Activated CD4-positive, alpha-beta memory T cell treated with anti-CD3 and anti-CD28 coated beads, Interleukin-2, amount 10 ng/mL, durations not matched to agents 7 days and 5 days (primary cell): ENCODE measurements at regions of chr10 and their contacts with region 1.

Region 1: DNA sequence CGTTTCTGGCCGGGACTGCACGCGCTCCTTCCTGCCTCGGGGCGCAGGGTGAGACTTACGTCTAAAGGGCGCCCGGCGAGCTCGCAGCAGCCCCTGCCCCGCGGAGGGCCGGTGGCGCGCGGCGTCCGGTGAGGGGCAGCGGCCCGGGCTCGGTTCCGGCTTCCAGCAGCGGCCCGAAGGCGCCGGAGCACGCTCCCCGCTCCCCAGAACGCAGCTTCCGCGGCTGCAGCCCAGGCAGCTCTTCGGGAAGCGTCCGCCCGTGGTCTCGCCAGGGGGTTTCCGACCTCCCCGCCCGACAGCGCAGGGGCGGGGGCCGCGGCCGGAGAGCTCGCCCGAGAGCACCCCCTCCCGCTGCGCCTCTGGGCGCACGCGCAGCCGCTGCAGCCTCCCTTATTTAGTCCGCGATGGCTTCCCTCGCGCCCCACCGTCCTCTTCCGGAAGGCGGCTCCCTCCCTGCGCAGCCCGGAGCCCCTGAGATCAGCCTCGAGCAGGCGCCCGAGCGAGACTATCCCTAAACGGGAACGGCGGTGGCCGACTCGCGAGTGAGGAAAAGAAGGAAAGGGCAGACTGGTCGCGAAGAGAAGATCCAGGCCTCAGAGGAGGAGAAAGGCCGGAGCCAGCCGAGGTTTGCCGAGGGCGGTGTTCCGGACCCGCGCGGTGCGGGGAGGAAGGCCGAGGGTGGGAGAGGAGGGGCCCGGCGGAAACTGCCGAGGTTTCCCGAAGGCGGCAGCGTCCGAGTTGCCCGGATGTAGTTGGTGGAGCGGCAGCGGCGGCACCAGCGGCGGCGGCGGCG is at the start of gene WAC:
- DNase-seq: peak; percentile 97
- H3K4me3 Mint-ChIP-seq: peak within 1 kb of the TSS; percentile 99
- H3K27ac Mint-ChIP-seq: peak within 1 kb of the TSS; percentile 100
- H3K4me1 Mint-ChIP-seq: peaks cover 58% of the 10 kb centered on the region
- H3K27me3 Mint-ChIP-seq: no peaks in the 10 kb centered on the region
- total RNA-seq, gene WAC: 128 to 132 TPM

Region 2: GRCh38 chr10:28479425-28479865 is 53.1 kb before region 1 on chr10:
- CTCF ChIA-PET with region 1: no interaction called
- POLR2A ChIA-PET with region 1: no interaction called
- DNase-seq: no peak
- H3K4me3 Mint-ChIP-seq: no peak overlapping the region
- H3K27ac Mint-ChIP-seq: no peak overlapping the region
- H3K4me1 Mint-ChIP-seq: no peaks in the 10 kb centered on the region
- H3K27me3 Mint-ChIP-seq: no peaks in the 10 kb centered on the region

Region 3: DNA sequence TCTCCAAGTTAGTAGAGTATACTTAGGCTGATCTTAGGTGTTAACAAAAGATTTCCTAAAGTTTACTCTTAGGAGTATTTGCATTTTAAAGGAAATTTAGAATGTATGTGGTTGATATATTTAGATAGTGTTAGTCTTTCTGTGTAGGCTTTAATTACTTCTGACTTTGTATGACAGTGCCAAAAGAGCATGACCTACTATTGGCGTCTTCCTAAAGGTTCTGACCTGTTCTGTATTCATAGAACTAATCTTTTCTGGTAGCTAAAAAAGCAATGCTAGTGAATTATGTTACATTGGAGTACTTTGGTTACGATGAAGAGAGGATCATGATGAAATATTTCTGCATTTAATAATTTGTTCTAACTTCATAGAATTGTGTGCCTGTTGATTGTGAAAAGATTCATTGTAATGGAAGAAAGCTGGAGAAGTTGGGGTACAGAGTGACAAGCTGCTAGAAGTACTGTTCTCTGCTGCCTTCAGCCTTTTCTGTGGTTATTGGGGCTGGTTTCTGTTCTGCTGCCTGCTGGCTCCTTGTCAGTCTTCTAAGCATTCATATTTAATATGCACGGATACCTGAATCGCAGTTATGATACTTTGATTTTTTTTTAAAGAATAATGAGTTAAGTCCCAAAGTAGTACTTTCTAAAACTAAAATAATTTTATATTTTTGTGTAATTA is 13.5 kb after region 1 on chr10:
- CTCF ChIA-PET with region 1: interaction called, 4 read pairs
- POLR2A ChIA-PET with region 1: interaction called, 53 read pairs
- DNase-seq: no peak
- H3K4me3 Mint-ChIP-seq: no peak overlapping the region
- H3K27ac Mint-ChIP-seq: peak overlapping the region; percentile 19
- H3K4me1 Mint-ChIP-seq: peaks cover 67% of the 10 kb centered on the region
- H3K27me3 Mint-ChIP-seq: no peaks in the 10 kb centered on the region

Region 4: DNA sequence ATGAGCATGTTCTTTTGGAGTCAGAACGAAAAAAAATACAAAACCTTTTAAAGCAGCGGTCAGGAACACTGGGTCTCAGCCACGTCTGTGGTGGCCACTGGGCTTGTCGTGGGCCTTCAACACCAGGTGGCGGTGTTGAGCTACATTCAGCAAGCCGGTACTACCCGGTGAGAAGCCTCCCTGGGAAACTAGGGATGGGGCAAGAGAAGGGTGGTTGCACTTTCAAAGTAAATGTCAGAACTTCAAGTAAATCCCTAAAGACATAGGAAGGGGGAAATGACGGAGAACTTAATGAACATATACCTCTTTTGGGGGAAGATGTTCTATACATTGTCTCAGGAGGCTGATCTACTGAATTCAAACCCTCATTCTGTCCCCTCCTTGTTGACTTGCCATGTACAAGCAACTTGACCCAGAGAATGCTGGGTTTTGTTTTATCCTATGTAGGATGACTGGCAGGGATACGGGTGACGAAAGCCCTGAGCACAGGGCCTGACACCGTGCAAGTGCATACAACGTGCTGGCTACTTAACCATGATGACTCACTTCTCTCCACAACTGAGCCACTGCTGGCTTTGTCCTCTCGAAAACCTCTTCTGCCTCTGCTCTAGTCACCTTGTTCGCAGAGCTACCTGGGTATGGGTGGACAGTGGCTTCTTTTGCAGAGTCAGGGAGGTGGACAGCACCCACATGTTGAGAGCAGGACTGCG is 95.8 kb after region 1 on chr10:
- CTCF ChIA-PET with region 1: no interaction called
- POLR2A ChIA-PET with region 1: no interaction called
- DNase-seq: peak; percentile 72
- H3K4me3 Mint-ChIP-seq: no peak overlapping the region
- H3K27ac Mint-ChIP-seq: no peak overlapping the region
- H3K4me1 Mint-ChIP-seq: peaks cover 2% of the 10 kb centered on the region
- H3K27me3 Mint-ChIP-seq: peaks cover 17% of the 10 kb centered on the region